ENCODE measurements at regions of chr22 and their contacts with region 1.

Region 1: GRCh38 chr22:32528984-32529982 is 54.7 kb downstream of the FBXO7 start:
- DNase-seq: peak; percentile 69
- ATAC-seq: peak; percentile 89
- H3K4me3 ChIP-seq: no peak overlapping the region
- H3K27ac ChIP-seq: no peak overlapping the region
- H3K4me1 ChIP-seq: no peaks in the 10 kb centered on the region
- H3K27me3 ChIP-seq: peaks cover 10% of the 10 kb centered on the region
- CTCF ChIP-seq: peak; percentile 70

Region 2: DNA sequence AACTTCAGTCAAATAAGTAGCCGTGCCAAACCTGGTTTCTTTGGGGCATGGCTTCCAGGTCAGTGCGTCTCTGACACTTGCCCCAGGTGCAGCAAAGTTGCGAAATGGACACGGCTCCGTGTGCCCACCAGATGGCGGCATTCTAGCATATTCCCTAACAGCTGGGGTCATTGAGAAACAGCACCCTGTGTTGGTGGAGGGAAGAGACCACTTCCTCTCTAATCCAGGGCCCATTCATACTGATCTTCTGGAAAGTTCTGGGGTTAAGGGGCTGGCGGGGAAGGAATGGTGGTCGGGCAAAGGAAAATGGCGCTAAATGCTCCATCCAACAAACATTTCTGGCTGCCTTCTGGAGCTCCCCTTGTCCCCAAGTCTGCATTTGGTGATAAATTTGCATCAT is 131.0 kb after region 1 on chr22:
- CTCF ChIA-PET with region 1: no interaction called
- POLR2A ChIA-PET with region 1: no interaction called
- intact Hi-C with region 1: loop called (anchors 5 kb)
- DNase-seq: peak; percentile 16
- ATAC-seq: no peak
- H3K4me3 ChIP-seq: no peak overlapping the region
- H3K27ac ChIP-seq: no peak overlapping the region
- H3K4me1 ChIP-seq: no peaks in the 10 kb centered on the region
- H3K27me3 ChIP-seq: no peaks in the 10 kb centered on the region
- CTCF ChIP-seq: peak; percentile 46

Region 3: DNA sequence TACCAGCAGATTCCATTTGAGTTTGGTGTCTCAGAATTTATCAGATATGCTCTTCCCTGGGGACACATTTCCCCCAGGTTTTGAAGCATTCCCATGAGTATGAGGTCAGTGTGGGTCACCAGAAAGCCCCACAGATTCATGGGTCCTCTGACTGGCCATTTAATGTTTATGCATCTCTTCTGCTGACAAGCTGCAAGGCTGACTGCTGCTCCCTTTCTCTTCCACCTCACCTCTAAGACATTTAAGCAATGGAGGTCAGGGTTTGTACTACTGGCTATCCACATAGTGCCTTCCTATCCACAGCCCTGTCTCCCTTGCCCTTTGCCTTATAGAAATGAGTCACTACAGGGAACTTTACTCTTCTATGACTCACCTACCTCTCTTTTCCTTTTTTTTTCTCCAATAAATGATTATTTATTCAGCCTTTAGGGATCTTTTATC is 166.2 kb after region 1 on chr22:
- CTCF ChIA-PET with region 1: no interaction called
- POLR2A ChIA-PET with region 1: no interaction called
- intact Hi-C with region 1: no loop called
- DNase-seq: peak; percentile 50
- ATAC-seq: peak; percentile 74
- H3K4me3 ChIP-seq: no peak overlapping the region
- H3K27ac ChIP-seq: no peak overlapping the region
- H3K4me1 ChIP-seq: peaks cover 5% of the 10 kb centered on the region; the same call in 1 of the 2 replicates
- H3K27me3 ChIP-seq: no peaks in the 10 kb centered on the region
- CTCF ChIP-seq: no peak

Region 4: GRCh38 chr22:32823024-32823730 is 293.9 kb after region 1 on chr22:
- CTCF ChIA-PET with region 1: no interaction called
- POLR2A ChIA-PET with region 1: no interaction called
- intact Hi-C with region 1: loop called (anchors 10 kb)
- DNase-seq: peak; percentile 29
- ATAC-seq: no peak
- H3K4me3 ChIP-seq: no peak overlapping the region
- H3K27ac ChIP-seq: no peak overlapping the region
- H3K4me1 ChIP-seq: no peaks in the 10 kb centered on the region
- H3K27me3 ChIP-seq: no peaks in the 10 kb centered on the region
- CTCF ChIP-seq: peak; percentile 37

Region 5: DNA sequence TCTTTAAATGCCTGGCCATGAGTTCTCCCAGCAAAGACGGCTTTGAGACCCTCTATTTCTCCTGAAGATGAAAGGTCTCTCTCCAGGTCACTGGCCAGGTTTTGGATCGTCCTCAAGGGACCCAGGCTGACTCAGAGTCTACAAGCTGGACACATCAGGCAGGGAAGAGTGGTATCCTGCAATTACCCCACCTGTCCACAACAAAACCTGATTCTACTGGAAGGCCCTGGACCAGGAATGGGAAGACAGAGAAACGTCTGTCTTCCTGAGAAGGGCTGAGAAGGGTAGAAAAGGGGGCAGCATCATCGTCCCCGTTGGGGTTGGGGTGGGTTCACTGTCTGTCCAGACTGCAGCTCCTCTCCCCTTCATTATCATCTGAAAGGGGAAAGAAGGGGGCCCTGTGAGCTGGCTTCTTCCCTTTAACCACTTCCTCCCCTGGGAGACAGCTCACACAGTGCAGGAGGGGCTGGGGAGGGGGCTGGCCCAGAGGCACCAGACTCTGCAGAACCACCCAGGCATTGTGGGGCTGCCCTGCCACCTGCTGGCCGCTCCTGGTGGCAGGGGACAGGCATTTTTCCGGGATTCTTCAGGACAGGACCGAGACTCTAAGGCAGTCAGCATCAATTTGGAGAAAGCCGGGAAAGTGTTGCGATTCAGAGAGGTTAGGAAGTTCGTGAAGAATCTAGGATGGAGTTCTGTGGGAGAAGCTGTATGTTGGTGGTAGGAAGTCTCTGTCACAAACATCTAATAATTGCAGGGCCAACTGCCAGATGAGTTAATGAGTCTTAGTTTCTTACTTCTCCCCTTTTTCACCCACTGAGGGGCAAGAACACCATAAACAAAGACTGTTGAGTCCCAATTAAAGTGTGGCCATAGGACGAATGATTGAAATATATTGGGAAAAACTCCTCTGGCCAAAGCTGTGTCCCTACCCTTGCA is 471.3 kb after region 1 on chr22:
- CTCF ChIA-PET with region 1: no interaction called
- POLR2A ChIA-PET with region 1: no interaction called
- intact Hi-C with region 1: loop called (anchors 5 kb)
- DNase-seq: peak; percentile 32
- ATAC-seq: no peak; the same call in 1 of the 2 replicates
- H3K4me3 ChIP-seq: no peak overlapping the region
- H3K27ac ChIP-seq: no peak overlapping the region
- H3K4me1 ChIP-seq: no peaks in the 10 kb centered on the region
- H3K27me3 ChIP-seq: no peaks in the 10 kb centered on the region
- CTCF ChIP-seq: peak; percentile 67

Region 6: GRCh38 chr22:33049119-33049729 is 519.9 kb after region 1 on chr22:
- CTCF ChIA-PET with region 1: no interaction called
- POLR2A ChIA-PET with region 1: no interaction called
- intact Hi-C with region 1: loop called (anchors 5 kb)
- DNase-seq: peak; percentile 44
- ATAC-seq: no peak
- H3K4me3 ChIP-seq: no peak overlapping the region
- H3K27ac ChIP-seq: no peak overlapping the region
- H3K4me1 ChIP-seq: no peaks in the 10 kb centered on the region
- H3K27me3 ChIP-seq: no peaks in the 10 kb centered on the region
- CTCF ChIP-seq: peak; percentile 65

Measured in PC-3 (cell line).